Activated B cell treated with CpG ODN at 0.5 μM for 24 hours (primary cell): ENCODE measurements at regions of chr20 and their contacts with region 1.

Region 1: GRCh38 chr20:5168651-5169396 is 42.0 kb downstream of the CDS2 start:
- DNase-seq: no peak
- ATAC-seq: peak; percentile 64
- H3K4me3 Mint-ChIP-seq: peak overlapping the region; percentile 60
- H3K27ac Mint-ChIP-seq: peak overlapping the region; percentile 59
- H3K4me1 Mint-ChIP-seq: peaks cover 87% of the 10 kb centered on the region
- H3K27me3 Mint-ChIP-seq: no peaks in the 10 kb centered on the region
- CTCF ChIP-seq: no peak

Region 2: GRCh38 chr20:5126512-5127203 is 42.2 kb before region 1 on chr20 and contains the start of gene CDS2:
- CTCF ChIA-PET with region 1: interaction called, 9 read pairs
- POLR2A ChIA-PET with region 1: interaction called, 5 read pairs
- intact Hi-C with region 1: loop called (anchors 1 kb)
- DNase-seq: peak; percentile 99
- ATAC-seq: peak; percentile 87
- H3K4me3 Mint-ChIP-seq: peak within 1 kb of the TSS; percentile 87
- H3K27ac Mint-ChIP-seq: peak within 1 kb of the TSS; percentile 90
- H3K4me1 Mint-ChIP-seq: peaks cover 33% of the 10 kb centered on the region
- H3K27me3 Mint-ChIP-seq: no peaks in the 10 kb centered on the region
- CTCF ChIP-seq: no peak
- total RNA-seq, gene CDS2: 32.4 and 37.4 TPM in 2 replicates

Region 3: GRCh38 chr20:5741089-5741488 is 572.3 kb after region 1 on chr20:
- CTCF ChIA-PET with region 1: no interaction called
- POLR2A ChIA-PET with region 1: no interaction called
- intact Hi-C with region 1: no loop called
- DNase-seq: no peak
- ATAC-seq: no peak
- H3K4me3 Mint-ChIP-seq: no peak overlapping the region
- H3K27ac Mint-ChIP-seq: no peak overlapping the region
- H3K4me1 Mint-ChIP-seq: peaks cover 23% of the 10 kb centered on the region
- H3K27me3 Mint-ChIP-seq: peaks cover 34% of the 10 kb centered on the region
- CTCF ChIP-seq: no peak